Activated B cell treated with CpG ODN at 0.5 μM for 24 hours (primary cell): ENCODE measurements at regions of chr2 and their contacts with region 1.

Region 1: GRCh38 chr2:246489-247144 is 17.2 kb downstream of the SH3YL1 start:
- DNase-seq: no peak
- ATAC-seq: peak; percentile 50
- H3K4me3 Mint-ChIP-seq: no peak overlapping the region
- H3K27ac Mint-ChIP-seq: no peak overlapping the region
- H3K4me1 Mint-ChIP-seq: peaks cover 5% of the 10 kb centered on the region
- H3K27me3 Mint-ChIP-seq: no peaks in the 10 kb centered on the region
- CTCF ChIP-seq: no peak

Region 2: DNA sequence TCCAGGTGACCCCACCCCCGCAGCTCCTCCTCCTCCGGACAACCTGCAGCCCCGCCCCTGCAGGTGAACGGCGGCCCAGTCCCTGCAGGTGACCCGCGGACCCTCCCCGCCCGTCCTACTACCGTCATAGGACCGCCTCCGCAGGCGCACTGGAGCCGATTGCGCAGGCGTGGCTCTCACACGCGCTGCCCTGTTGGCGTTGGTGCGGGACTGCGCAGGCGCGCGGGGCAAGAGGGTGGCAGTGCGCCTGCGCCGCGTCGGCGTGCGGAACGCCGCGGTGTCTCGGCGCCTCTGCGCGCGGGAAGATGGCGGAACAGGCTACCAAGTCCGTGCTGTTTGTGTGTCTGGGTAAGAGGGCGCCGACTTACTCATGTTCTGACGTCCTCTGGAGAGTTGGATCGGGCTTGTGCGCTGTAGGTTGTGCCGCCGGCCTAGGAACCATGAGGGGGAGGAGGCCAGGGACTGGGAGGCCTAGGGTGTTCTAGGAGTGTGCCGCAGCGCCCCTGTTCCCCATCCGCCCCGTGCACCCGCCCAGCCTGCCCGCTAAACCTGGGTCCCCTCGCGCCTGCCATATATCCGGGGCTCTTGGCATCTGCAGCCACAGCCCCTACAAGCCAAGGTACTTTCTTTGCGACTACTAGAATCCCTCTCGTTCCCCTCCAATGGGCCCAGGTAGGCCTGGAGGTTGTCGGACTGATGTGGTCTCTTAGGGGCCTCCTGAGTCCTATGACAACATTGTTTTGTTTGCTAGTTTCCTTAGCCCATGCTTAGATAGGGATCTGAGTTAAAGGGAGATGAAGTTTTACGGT is 18.2 kb after region 1 on chr2 and contains the start of gene ACP1:
- CTCF ChIA-PET with region 1: interaction called, 4 read pairs
- POLR2A ChIA-PET with region 1: no interaction called
- intact Hi-C with region 1: loop called (anchors 1 kb)
- DNase-seq: peak; percentile 95
- ATAC-seq: peak; percentile 85
- H3K4me3 Mint-ChIP-seq: peak within 1 kb of the TSS; percentile 93
- H3K27ac Mint-ChIP-seq: peak within 1 kb of the TSS; percentile 93
- H3K4me1 Mint-ChIP-seq: peaks cover 50% of the 10 kb centered on the region
- H3K27me3 Mint-ChIP-seq: no peaks in the 10 kb centered on the region
- CTCF ChIP-seq: no peak
- total RNA-seq, gene ACP1: 80.1 and 81.8 TPM in 2 replicates

Region 3: GRCh38 chr2:290090-290722 is 43.6 kb after region 1 on chr2:
- CTCF ChIA-PET with region 1: interaction called, 23 read pairs
- POLR2A ChIA-PET with region 1: no interaction called
- intact Hi-C with region 1: loop called (anchors 1 kb)
- DNase-seq: no peak
- ATAC-seq: peak; percentile 55
- H3K4me3 Mint-ChIP-seq: peak overlapping the region; percentile 67
- H3K27ac Mint-ChIP-seq: no peak overlapping the region
- H3K4me1 Mint-ChIP-seq: peaks cover 17% of the 10 kb centered on the region
- H3K27me3 Mint-ChIP-seq: peaks cover 22% of the 10 kb centered on the region
- CTCF ChIP-seq: no peak

Region 4: GRCh38 chr2:535222-535621 is 288.6 kb after region 1 on chr2:
- CTCF ChIA-PET with region 1: no interaction called
- POLR2A ChIA-PET with region 1: no interaction called
- intact Hi-C with region 1: loop called (anchors 10 kb)
- DNase-seq: no peak
- ATAC-seq: no peak
- H3K4me3 Mint-ChIP-seq: no peak overlapping the region
- H3K27ac Mint-ChIP-seq: no peak overlapping the region
- H3K4me1 Mint-ChIP-seq: no peaks in the 10 kb centered on the region
- H3K27me3 Mint-ChIP-seq: peaks cover 14% of the 10 kb centered on the region
- CTCF ChIP-seq: no peak

Region 5: GRCh38 chr2:567850-568638 is 321.4 kb after region 1 on chr2:
- CTCF ChIA-PET with region 1: no interaction called
- POLR2A ChIA-PET with region 1: no interaction called
- intact Hi-C with region 1: no loop called
- DNase-seq: no peak
- ATAC-seq: no peak
- H3K4me3 Mint-ChIP-seq: no peak overlapping the region
- H3K27ac Mint-ChIP-seq: no peak overlapping the region
- H3K4me1 Mint-ChIP-seq: no peaks in the 10 kb centered on the region
- H3K27me3 Mint-ChIP-seq: peaks cover 42% of the 10 kb centered on the region
- CTCF ChIP-seq: no peak

Region 6: GRCh38 chr2:636641-637405 is 390.2 kb after region 1 on chr2:
- CTCF ChIA-PET with region 1: interaction called, 42 read pairs
- POLR2A ChIA-PET with region 1: no interaction called
- intact Hi-C with region 1: loop called (anchors 1 kb)
- DNase-seq: peak; percentile 54
- ATAC-seq: peak; percentile 71
- H3K4me3 Mint-ChIP-seq: peak overlapping the region; percentile 83
- H3K27ac Mint-ChIP-seq: peak overlapping the region; percentile 54
- H3K4me1 Mint-ChIP-seq: peaks cover 4% of the 10 kb centered on the region
- H3K27me3 Mint-ChIP-seq: no peaks in the 10 kb centered on the region
- CTCF ChIP-seq: peak; percentile 77

Region 7: GRCh38 chr2:667332-667999 is 420.8 kb after region 1 on chr2:
- CTCF ChIA-PET with region 1: interaction called, 3 read pairs
- POLR2A ChIA-PET with region 1: no interaction called
- intact Hi-C with region 1: loop called (anchors 10 kb)
- DNase-seq: no peak
- ATAC-seq: peak; percentile 75
- H3K4me3 Mint-ChIP-seq: no peak overlapping the region
- H3K27ac Mint-ChIP-seq: no peak overlapping the region
- H3K4me1 Mint-ChIP-seq: peaks cover 12% of the 10 kb centered on the region
- H3K27me3 Mint-ChIP-seq: no peaks in the 10 kb centered on the region
- CTCF ChIP-seq: no peak

Region 8: DNA sequence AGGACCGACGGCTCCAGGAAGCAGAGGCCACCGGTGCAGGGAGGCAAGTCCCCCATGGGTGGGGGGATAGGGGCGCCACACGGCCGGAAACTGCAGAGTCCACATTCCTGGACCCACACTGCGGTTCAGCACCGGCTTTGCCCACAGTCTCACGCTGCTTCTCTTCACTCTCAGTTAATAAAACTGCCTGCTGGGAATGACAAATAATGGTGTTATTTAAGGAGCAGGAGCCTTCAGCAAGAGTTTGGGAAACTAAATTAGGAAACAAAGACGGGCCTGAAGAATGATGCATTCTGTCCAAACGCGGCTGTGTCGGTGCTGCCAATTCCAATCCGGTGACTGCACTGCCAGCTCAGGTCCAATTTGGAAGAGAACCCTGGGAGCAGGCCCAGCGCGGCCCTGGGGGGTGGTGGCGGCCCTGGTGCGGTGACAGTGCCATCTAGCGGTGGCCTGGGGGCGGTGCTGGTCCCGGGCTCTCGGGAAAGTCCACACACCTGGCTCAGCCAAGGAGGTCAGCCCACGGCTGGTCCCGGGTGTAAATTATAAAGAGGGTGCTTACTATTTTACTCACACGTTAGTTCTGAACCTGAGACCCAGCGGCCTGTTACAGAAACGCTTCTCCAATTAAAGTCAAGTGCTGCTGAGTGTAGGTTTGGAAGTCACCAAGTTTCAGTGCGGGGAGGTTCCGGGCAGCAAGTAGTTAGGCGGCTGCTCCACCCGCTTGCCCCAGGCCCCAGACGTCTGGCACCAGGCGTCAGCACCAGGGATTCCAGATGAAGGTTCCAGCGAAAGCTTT is 1570.8 kb after region 1 on chr2:
- CTCF ChIA-PET with region 1: no interaction called
- POLR2A ChIA-PET with region 1: no interaction called
- intact Hi-C with region 1: loop called (anchors 5 kb)
- DNase-seq: peak; percentile 45
- ATAC-seq: peak; percentile 57
- H3K4me3 Mint-ChIP-seq: no peak overlapping the region
- H3K27ac Mint-ChIP-seq: no peak overlapping the region
- H3K4me1 Mint-ChIP-seq: peaks cover 2% of the 10 kb centered on the region
- H3K27me3 Mint-ChIP-seq: no peaks in the 10 kb centered on the region
- CTCF ChIP-seq: peak; percentile 86